ENCODE measurements at regions of chr1 and their contacts with region 1.

Region 1: DNA sequence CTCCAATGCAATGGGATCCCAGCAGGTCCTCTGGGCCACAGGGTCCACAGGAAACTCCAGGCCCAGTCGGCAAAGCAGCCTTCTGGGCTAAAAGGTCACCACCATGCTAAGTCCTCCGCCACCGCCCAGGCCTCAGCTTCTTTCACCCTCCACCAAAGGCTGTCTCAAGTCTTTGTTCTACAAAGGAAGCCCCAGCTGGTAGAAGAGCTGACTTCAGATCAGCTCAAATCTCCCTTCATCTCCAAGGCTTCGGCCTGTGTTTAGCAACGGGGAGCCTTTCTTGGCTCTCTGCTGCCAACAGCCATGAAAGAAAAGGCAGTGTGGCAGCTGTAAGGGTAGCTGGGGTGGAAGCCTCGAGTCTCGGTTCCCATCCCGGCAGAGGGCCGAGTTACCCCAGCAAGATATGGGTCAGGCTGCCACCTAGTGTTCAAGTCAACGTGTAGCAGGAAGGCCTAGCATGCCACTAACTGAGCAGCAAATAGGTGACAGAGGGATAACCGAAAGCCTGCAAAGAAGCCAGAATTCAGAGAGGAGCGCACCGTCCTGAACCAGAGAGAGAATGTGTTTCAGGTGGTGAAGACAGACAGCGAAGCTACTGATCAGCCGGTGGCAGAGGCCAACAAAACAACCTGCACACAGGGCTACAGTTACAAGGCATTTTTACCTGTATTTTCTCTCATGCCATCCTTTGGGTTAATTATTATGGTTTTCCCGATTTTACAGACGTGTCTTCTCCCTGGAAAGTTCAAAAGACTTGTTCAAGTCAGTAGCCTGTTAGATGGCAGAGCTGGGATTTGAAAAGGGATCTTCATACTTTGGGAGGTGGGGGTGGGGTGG is 26.8 kb upstream of the CRNN start:
- DNase-seq: peak; percentile 32 to 72 (median 59)
- ATAC-seq: peak; percentile 96
- H3K4me3 ChIP-seq: no peak overlapping the region
- H3K4me3 Mint-ChIP-seq: no peak overlapping the region
- H3K27ac ChIP-seq: no peak overlapping the region
- H3K27ac Mint-ChIP-seq: peak overlapping the region in 4 of 9 donors; percentile 42 to 72 (median 46)
- H3K4me1 ChIP-seq: no peaks in the 10 kb centered on the region
- H3K4me1 Mint-ChIP-seq: peaks cover 0 to 8% (median 0%) of the 10 kb centered on the region in 7 donors
- H3K27me3 ChIP-seq: no peaks in the 10 kb centered on the region
- H3K27me3 Mint-ChIP-seq: peaks cover 15 to 30% (median 23%) of the 10 kb centered on the region in 5 donors

Region 2: GRCh38 chr1:151993654-151994496 is 447.0 kb before region 1 on chr1 and contains the start of gene S100A10:
- CTCF ChIA-PET with region 1: no interaction called
- POLR2A ChIA-PET with region 1: no interaction called
- intact Hi-C with region 1: no loop called
- DNase-seq: peak; percentile 64 to 82 (median 81)
- ATAC-seq: peak; percentile 85
- H3K4me3 ChIP-seq: peak within 1 kb of the TSS; percentile 88
- H3K4me3 Mint-ChIP-seq: peak within 1 kb of the TSS; percentile 90 to 100 (median 96)
- H3K27ac ChIP-seq: peak within 1 kb of the TSS; percentile 83
- H3K27ac Mint-ChIP-seq: peak within 1 kb of the TSS; percentile 89 to 98 (median 95)
- H3K4me1 ChIP-seq: peaks cover 22 to 37% of the 10 kb centered on the region in 2 donors
- H3K4me1 Mint-ChIP-seq: peaks cover 33 to 56% (median 45%) of the 10 kb centered on the region in 7 donors
- H3K27me3 ChIP-seq: no peaks in the 10 kb centered on the region
- H3K27me3 Mint-ChIP-seq: peaks cover 0 to 10% (median 0%) of the 10 kb centered on the region in 5 donors
- total RNA-seq, gene S100A10: 131 to 361 (median 143) TPM

Region 3: DNA sequence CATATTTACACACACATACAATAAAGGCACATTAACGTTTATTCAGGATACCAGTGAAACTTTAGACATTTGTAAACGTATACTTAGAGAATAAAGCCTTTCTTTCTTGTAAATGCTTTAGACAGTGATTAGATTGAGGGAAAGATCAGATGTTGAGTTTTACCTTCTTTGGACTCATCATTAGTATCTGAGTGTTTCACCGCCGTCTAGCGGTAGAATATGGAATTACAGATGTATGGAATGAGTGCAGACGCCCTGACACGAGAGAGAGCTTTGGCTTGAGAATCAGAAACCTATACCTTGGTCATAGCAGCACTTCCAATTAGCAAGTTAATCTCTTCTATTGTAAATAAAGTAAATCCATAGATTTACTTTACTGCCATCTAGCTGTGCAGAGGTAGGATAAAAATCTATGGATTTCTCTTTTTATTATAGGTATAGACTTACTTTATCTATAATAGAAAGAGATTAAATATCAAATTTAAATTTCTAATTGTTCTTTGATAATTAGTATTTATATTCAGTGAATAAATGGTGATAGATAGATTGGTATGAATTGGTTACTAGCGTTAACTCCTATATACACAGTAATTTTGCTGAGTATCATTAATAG is 93.6 kb before region 1 on chr1:
- CTCF ChIA-PET with region 1: interaction called, 4 read pairs
- POLR2A ChIA-PET with region 1: no interaction called
- intact Hi-C with region 1: loop called (anchors 2 to 5 kb)
- DNase-seq: peak in 6 of 9 donors; percentile 20 to 59 (median 48)
- ATAC-seq: peak; percentile 57
- H3K4me3 ChIP-seq: no peak overlapping the region
- H3K4me3 Mint-ChIP-seq: no peak overlapping the region
- H3K27ac ChIP-seq: no peak overlapping the region
- H3K27ac Mint-ChIP-seq: no peak overlapping the region
- H3K4me1 ChIP-seq: no peaks in the 10 kb centered on the region
- H3K4me1 Mint-ChIP-seq: no peaks in the 10 kb centered on the region
- H3K27me3 ChIP-seq: peaks cover 0 to 6% of the 10 kb centered on the region in 2 donors
- H3K27me3 Mint-ChIP-seq: peaks cover 19 to 35% (median 22%) of the 10 kb centered on the region in 5 donors